Activated CD8-positive, alpha-beta T cell treated with anti-CD3 and anti-CD28 coated beads for 36 hours (primary cell): ENCODE measurements at regions of chr2 and their contacts with region 1.

Region 1: GRCh38 chr2:111134055-111134454 is 13.3 kb downstream of the BCL2L11 start:
- DNase-seq: no peak
- ATAC-seq: no peak
- H3K4me3 Mint-ChIP-seq: no peak overlapping the region
- H3K27ac Mint-ChIP-seq: no peak overlapping the region
- H3K4me1 Mint-ChIP-seq: peaks cover 33% of the 10 kb centered on the region
- H3K27me3 Mint-ChIP-seq: no peaks in the 10 kb centered on the region
- CTCF ChIP-seq: peak; percentile 49

Region 2: GRCh38 chr2:111122631-111123421 is 11.2 kb before region 1 on chr2:
- CTCF ChIA-PET with region 1: interaction called, 11 read pairs
- POLR2A ChIA-PET with region 1: interaction called, 4 read pairs
- intact Hi-C with region 1: no loop called
- DNase-seq: peak; percentile 52
- ATAC-seq: no peak
- H3K4me3 Mint-ChIP-seq: peak overlapping the region; percentile 95
- H3K27ac Mint-ChIP-seq: peak overlapping the region; percentile 30
- H3K4me1 Mint-ChIP-seq: peaks cover 53% of the 10 kb centered on the region
- H3K27me3 Mint-ChIP-seq: peaks cover 18% of the 10 kb centered on the region
- CTCF ChIP-seq: no peak

Region 3: GRCh38 chr2:111209045-111209514 is 75.0 kb after region 1 on chr2:
- CTCF ChIA-PET with region 1: no interaction called
- POLR2A ChIA-PET with region 1: no interaction called
- intact Hi-C with region 1: no loop called
- DNase-seq: peak; percentile 80
- ATAC-seq: peak; percentile 94
- H3K4me3 Mint-ChIP-seq: no peak overlapping the region
- H3K27ac Mint-ChIP-seq: no peak overlapping the region
- H3K4me1 Mint-ChIP-seq: peaks cover 16% of the 10 kb centered on the region
- H3K27me3 Mint-ChIP-seq: peaks cover 7% of the 10 kb centered on the region
- CTCF ChIP-seq: no peak